ENCODE measurements at regions of chr12 and their contacts with region 1.

Region 1: GRCh38 chr12:5988659-5989116 is 43.6 kb upstream of the ANO2 start:
- DNase-seq: peak; percentile 73
- H3K4me3 Mint-ChIP-seq: no peak overlapping the region
- H3K27ac Mint-ChIP-seq: no peak overlapping the region
- H3K4me1 Mint-ChIP-seq: no peaks in the 10 kb centered on the region
- H3K27me3 Mint-ChIP-seq: peaks cover 2% of the 10 kb centered on the region

Region 2: DNA sequence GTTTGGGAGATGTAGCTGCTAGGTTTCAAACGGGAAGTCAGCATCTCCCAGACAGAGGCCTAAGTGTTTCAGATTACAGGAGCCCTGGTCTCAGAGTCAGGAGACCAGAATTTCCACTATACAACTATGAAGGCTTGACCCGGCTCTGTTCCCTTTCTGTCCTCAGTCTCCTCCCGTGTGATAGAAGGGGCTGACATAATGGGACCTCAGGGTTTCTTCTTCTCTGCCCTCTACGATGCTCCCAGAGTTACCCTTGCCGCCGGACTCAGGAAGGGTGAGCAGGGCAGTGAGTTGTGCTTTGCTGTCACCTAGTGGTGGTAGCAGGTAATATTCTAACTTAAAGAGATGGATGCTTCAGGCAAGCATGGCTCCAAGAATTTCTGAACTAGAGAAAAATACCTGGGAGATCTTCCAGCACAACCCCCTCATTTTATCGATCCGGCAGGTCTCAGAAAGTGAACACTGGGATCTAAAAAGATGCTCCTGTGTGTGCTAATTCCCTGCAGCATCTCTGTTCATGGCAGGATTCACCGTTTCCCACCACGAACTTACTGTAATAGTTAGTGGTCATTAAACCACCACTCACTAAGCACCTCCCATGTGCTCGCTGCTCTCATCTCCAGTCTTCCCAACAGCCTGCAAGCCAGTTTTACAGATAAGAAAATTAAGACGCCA is 51.3 kb after region 1 on chr12:
- CTCF ChIA-PET with region 1: interaction called, 26 read pairs
- POLR2A ChIA-PET with region 1: no interaction called
- DNase-seq: peak; percentile 57
- H3K4me3 Mint-ChIP-seq: no peak overlapping the region
- H3K27ac Mint-ChIP-seq: no peak overlapping the region
- H3K4me1 Mint-ChIP-seq: peaks cover 2% of the 10 kb centered on the region
- H3K27me3 Mint-ChIP-seq: no peaks in the 10 kb centered on the region

Region 3: DNA sequence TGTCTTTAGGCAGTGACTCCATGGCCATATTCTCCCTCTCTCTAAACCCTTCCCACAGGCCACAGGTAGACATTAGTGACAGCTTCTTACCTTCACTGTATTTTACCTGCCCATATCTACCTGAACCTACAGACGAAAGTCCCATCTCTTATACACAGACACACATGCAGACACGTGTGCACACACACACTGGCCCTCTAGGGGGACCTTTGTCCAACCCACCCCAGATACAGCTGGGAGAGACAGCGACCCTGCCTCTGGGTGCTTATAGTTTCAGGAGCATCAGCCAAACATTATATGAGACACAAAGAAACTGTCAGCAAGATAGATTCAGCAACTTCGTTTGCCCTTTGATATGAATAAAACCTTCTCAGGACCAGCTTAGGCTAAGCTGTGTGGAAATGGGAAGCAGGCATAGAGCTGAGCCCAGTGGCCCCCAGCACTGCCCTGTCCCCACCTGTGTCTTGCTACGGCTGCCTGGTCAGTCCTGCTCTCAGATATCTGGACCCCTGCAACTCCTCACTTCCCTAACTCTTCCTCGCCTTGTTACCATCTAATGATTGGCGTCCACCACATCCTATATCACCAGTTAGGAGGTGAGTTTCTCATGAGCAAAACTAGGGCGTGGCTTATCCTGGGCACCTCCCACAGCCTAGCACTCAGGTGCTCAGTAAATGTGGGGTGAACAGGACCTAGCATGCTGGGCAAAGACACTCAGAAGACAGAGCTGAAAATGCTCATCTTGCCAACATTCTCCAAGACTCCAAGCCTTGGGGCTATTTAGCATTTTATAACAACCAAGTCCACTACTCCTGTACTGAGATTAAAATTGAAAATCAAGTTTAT is 199.5 kb after region 1 on chr12:
- CTCF ChIA-PET with region 1: no interaction called
- POLR2A ChIA-PET with region 1: no interaction called
- DNase-seq: no peak
- H3K4me3 Mint-ChIP-seq: no peak overlapping the region
- H3K27ac Mint-ChIP-seq: no peak overlapping the region
- H3K4me1 Mint-ChIP-seq: no peaks in the 10 kb centered on the region
- H3K27me3 Mint-ChIP-seq: peaks cover 15% of the 10 kb centered on the region